Activated CD4-positive, alpha-beta T cell treated with anti-CD3 and anti-CD28 coated beads for 36 hours (primary cell): ENCODE measurements at regions of chr2 and their contacts with region 1.

Region 1: GRCh38 chr2:10408649-10409579 is 39.2 kb downstream of the ODC1 start:
- DNase-seq: peak; percentile 91
- ATAC-seq: peak; percentile 65
- H3K4me3 Mint-ChIP-seq: peak overlapping the region; percentile 60
- H3K27ac Mint-ChIP-seq: peak overlapping the region; percentile 99
- H3K4me1 Mint-ChIP-seq: peaks cover 63% of the 10 kb centered on the region
- H3K27me3 Mint-ChIP-seq: no peaks in the 10 kb centered on the region

Region 2: GRCh38 chr2:9897331-9897737 is 511.6 kb before region 1 on chr2:
- CTCF ChIA-PET with region 1: no interaction called
- POLR2A ChIA-PET with region 1: no interaction called
- intact Hi-C with region 1: no loop called
- DNase-seq: peak; percentile 90
- ATAC-seq: peak; percentile 98
- H3K4me3 Mint-ChIP-seq: no peak overlapping the region
- H3K27ac Mint-ChIP-seq: no peak overlapping the region
- H3K4me1 Mint-ChIP-seq: peaks cover 27% of the 10 kb centered on the region
- H3K27me3 Mint-ChIP-seq: no peaks in the 10 kb centered on the region

Region 3: DNA sequence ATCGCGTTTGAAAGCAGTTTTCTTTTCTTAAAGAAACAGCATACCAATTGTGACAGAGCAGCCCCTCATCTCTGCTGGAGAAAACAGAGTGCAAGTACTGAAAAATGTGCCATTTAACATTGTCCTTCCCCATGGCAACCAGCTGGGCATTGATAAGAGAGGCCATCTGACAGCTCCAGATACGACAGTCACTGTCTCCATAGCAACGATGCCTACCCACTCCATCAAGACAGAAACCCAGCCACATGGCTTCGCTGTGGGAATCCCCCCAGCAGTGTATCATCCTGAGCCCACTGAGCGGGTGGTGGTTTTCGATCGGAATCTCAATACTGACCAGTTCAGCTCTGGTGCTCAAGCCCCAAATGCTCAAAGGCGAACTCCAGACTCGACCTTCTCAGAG is 447.9 kb before region 1 on chr2:
- CTCF ChIA-PET with region 1: no interaction called
- POLR2A ChIA-PET with region 1: no interaction called
- intact Hi-C with region 1: no loop called
- DNase-seq: no peak
- ATAC-seq: no peak
- H3K4me3 Mint-ChIP-seq: no peak overlapping the region
- H3K27ac Mint-ChIP-seq: no peak overlapping the region
- H3K4me1 Mint-ChIP-seq: peaks cover 15% of the 10 kb centered on the region
- H3K27me3 Mint-ChIP-seq: peaks cover 2% of the 10 kb centered on the region

Region 4: GRCh38 chr2:10091182-10091888 is 317.6 kb before region 1 on chr2:
- CTCF ChIA-PET with region 1: interaction called, 10 read pairs
- POLR2A ChIA-PET with region 1: no interaction called
- intact Hi-C with region 1: no loop called
- DNase-seq: peak; percentile 54
- ATAC-seq: peak; percentile 52
- H3K4me3 Mint-ChIP-seq: peak overlapping the region; percentile 31
- H3K27ac Mint-ChIP-seq: no peak overlapping the region
- H3K4me1 Mint-ChIP-seq: peaks cover 3% of the 10 kb centered on the region
- H3K27me3 Mint-ChIP-seq: peaks cover 46% of the 10 kb centered on the region

Region 5: GRCh38 chr2:10269711-10270610 is 139.0 kb before region 1 on chr2:
- CTCF ChIA-PET with region 1: interaction called, 3 read pairs
- POLR2A ChIA-PET with region 1: no interaction called
- intact Hi-C with region 1: loop called (anchors 1 kb)
- DNase-seq: no peak
- ATAC-seq: no peak
- H3K4me3 Mint-ChIP-seq: no peak overlapping the region
- H3K27ac Mint-ChIP-seq: no peak overlapping the region
- H3K4me1 Mint-ChIP-seq: peaks cover 6% of the 10 kb centered on the region
- H3K27me3 Mint-ChIP-seq: no peaks in the 10 kb centered on the region

Region 6: GRCh38 chr2:10331027-10331701 is 77.8 kb before region 1 on chr2:
- CTCF ChIA-PET with region 1: interaction called, 34 read pairs
- POLR2A ChIA-PET with region 1: interaction called, 17 read pairs
- intact Hi-C with region 1: loop called (anchors 1 kb)
- DNase-seq: peak; percentile 93
- ATAC-seq: peak; percentile 58
- H3K4me3 Mint-ChIP-seq: peak overlapping the region; percentile 91
- H3K27ac Mint-ChIP-seq: peak overlapping the region; percentile 92
- H3K4me1 Mint-ChIP-seq: peaks cover 81% of the 10 kb centered on the region
- H3K27me3 Mint-ChIP-seq: no peaks in the 10 kb centered on the region

Region 7: GRCh38 chr2:10390369-10390801 is 18.5 kb before region 1 on chr2:
- CTCF ChIA-PET with region 1: interaction called, 31 read pairs
- POLR2A ChIA-PET with region 1: no interaction called
- intact Hi-C with region 1: no loop called
- DNase-seq: no peak
- ATAC-seq: peak; percentile 55
- H3K4me3 Mint-ChIP-seq: no peak overlapping the region
- H3K27ac Mint-ChIP-seq: no peak overlapping the region
- H3K4me1 Mint-ChIP-seq: peaks cover 66% of the 10 kb centered on the region
- H3K27me3 Mint-ChIP-seq: no peaks in the 10 kb centered on the region